Activated B cell treated with CpG ODN at 0.5 μM for 24 hours (primary cell): ENCODE measurements at regions of chr5 and their contacts with region 1.

Region 1: DNA sequence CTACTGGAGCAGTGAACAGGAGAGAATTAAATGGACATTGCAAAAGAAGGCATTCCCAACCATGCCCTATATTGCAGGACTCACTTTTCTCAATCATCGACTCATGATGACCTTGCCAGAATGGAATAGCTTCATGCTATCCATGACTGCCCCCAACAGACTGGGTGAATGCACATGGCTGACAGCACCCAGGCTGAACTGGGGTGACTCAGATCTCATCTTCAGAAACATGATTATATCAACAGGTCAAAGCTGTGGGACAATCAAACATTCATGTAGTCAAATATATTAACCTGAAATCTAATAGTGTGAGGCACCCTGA is 34.7 kb upstream of the MIER3 start:
- DNase-seq: no peak
- ATAC-seq: peak; percentile 89
- H3K4me3 Mint-ChIP-seq: peak overlapping the region; percentile 16
- H3K27ac Mint-ChIP-seq: peak overlapping the region; percentile 54
- H3K4me1 Mint-ChIP-seq: peaks cover 15% of the 10 kb centered on the region
- H3K27me3 Mint-ChIP-seq: no peaks in the 10 kb centered on the region
- CTCF ChIP-seq: no peak

Region 2: GRCh38 chr5:56951946-56952691 is 34.5 kb before region 1 on chr5 and contains the start of gene MIER3:
- CTCF ChIA-PET with region 1: no interaction called
- POLR2A ChIA-PET with region 1: interaction called, 6 read pairs
- intact Hi-C with region 1: loop called (anchors 1 kb)
- DNase-seq: peak; percentile 75
- ATAC-seq: peak; percentile 96
- H3K4me3 Mint-ChIP-seq: peak within 1 kb of the TSS; percentile 95
- H3K27ac Mint-ChIP-seq: peak within 1 kb of the TSS; percentile 80
- H3K4me1 Mint-ChIP-seq: peaks cover 20% of the 10 kb centered on the region
- H3K27me3 Mint-ChIP-seq: peaks cover 7% of the 10 kb centered on the region
- CTCF ChIP-seq: no peak
- total RNA-seq, gene MIER3: 22.2 and 23.5 TPM in 2 replicates

Region 3: DNA sequence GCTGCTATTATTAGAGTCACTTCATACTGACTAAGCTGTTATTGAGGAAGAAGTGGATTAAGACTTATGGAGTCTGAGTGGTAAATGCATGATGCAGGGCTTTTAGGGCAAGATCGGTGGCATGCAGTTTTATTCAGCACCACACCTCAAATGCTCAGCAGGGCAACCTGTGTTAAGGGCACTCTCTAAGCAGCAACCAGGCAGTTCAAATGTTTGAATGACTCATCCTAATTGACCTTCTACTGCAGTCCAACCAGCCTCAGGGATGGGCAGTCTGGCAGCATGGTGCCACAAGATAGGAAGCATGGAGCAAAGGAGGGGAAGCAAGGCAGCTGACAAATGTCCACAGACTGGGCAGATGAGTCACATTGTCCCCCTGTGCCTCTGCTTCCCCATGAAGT is 45.6 kb after region 1 on chr5:
- CTCF ChIA-PET with region 1: no interaction called
- POLR2A ChIA-PET with region 1: no interaction called
- intact Hi-C with region 1: loop called (anchors 5 kb)
- DNase-seq: no peak
- ATAC-seq: no peak
- H3K4me3 Mint-ChIP-seq: no peak overlapping the region
- H3K27ac Mint-ChIP-seq: no peak overlapping the region
- H3K4me1 Mint-ChIP-seq: peaks cover 35% of the 10 kb centered on the region
- H3K27me3 Mint-ChIP-seq: no peaks in the 10 kb centered on the region
- CTCF ChIP-seq: no peak